Calu3 (cell line): ENCODE measurements at regions of chr4 and their contacts with region 1.

Region 1: GRCh38 chr4:147590249-147590920 is 26.8 kb upstream of the TMEM184C start:
- DNase-seq: peak; percentile 59
- H3K4me3 Mint-ChIP-seq: no peak overlapping the region
- H3K27ac Mint-ChIP-seq: no peak overlapping the region
- H3K4me1 Mint-ChIP-seq: no peaks in the 10 kb centered on the region
- H3K27me3 Mint-ChIP-seq: no peaks in the 10 kb centered on the region
- CTCF ChIP-seq: peak; percentile 38

Region 2: DNA sequence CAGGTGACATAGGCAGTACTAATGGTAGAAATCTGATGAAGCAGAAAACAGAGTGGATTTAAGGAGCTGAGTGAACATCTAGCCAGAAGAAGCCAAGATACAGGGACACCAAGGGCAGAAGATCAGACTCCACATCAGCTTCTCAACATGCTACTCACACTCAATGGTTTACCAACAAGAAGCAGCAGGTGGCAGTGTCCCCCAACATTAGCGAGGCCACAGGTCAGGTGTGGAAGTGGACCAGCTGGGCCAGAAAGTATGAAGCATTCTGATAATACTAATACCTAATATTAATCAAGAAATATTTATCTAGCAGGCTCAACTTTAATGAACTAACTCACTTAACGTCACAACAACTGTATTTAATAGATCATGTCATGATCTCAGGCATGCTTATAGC is 571.3 kb before region 1 on chr4:
- CTCF ChIA-PET with region 1: interaction called, 3 read pairs
- intact Hi-C with region 1: loop called (anchors 5 kb)
- DNase-seq: peak; percentile 65
- H3K4me3 Mint-ChIP-seq: no peak overlapping the region
- H3K27ac Mint-ChIP-seq: no peak overlapping the region
- H3K4me1 Mint-ChIP-seq: no peaks in the 10 kb centered on the region
- H3K27me3 Mint-ChIP-seq: no peaks in the 10 kb centered on the region
- CTCF ChIP-seq: peak; percentile 27

Region 3: DNA sequence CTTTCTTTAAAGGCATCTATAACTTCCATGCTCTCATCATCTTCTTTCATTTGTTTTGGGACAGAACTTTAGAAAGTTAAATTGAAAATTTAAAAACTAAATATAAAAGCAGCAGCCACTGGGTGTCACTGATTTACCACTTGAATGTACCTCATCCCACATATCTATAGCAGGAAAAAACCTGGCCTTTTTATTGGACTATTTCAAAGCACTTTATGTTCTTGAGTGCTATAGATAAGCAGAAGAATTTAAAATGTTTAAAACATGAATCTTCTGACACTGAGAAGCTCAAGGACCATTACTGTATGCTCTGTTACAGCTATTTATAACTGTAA is 479.4 kb before region 1 on chr4:
- CTCF ChIA-PET with region 1: no interaction called
- intact Hi-C with region 1: loop called (anchors 1 kb)
- DNase-seq: no peak
- H3K4me3 Mint-ChIP-seq: no peak overlapping the region
- H3K27ac Mint-ChIP-seq: no peak overlapping the region
- H3K4me1 Mint-ChIP-seq: no peaks in the 10 kb centered on the region
- H3K27me3 Mint-ChIP-seq: no peaks in the 10 kb centered on the region
- CTCF ChIP-seq: no peak

Region 4: DNA sequence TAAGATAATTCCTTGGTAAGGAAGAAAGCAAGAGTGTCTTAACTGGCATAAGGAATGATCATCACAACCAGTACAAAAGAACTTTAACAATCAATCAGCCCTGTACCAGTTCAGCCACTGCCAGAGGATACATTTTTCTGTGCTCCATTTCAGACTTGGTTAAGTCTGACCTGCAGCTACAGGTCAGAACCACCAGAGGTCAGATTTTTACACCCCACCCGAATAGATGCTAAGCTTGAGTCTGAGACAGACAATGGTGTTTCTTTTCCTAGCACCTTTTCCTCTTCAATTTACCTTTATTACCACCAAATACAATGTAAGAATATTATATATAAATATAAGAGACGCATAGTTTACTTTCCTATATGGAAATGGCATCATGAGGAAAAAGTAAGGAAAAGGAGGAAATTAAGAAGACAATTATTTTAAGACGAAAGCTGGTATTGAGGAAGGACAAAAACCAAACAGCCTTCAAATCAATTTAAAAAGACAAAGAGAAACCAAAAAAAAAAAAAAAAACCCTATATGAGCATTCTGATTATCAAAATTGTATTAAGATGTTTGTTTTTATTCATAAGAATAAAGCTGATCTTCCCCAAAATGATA is 429.4 kb before region 1 on chr4:
- CTCF ChIA-PET with region 1: interaction called, 10 read pairs
- intact Hi-C with region 1: loop called (anchors 1 kb)
- DNase-seq: peak; percentile 16
- H3K4me3 Mint-ChIP-seq: no peak overlapping the region
- H3K27ac Mint-ChIP-seq: no peak overlapping the region
- H3K4me1 Mint-ChIP-seq: no peaks in the 10 kb centered on the region
- H3K27me3 Mint-ChIP-seq: no peaks in the 10 kb centered on the region
- CTCF ChIP-seq: peak; percentile 41

Region 5: DNA sequence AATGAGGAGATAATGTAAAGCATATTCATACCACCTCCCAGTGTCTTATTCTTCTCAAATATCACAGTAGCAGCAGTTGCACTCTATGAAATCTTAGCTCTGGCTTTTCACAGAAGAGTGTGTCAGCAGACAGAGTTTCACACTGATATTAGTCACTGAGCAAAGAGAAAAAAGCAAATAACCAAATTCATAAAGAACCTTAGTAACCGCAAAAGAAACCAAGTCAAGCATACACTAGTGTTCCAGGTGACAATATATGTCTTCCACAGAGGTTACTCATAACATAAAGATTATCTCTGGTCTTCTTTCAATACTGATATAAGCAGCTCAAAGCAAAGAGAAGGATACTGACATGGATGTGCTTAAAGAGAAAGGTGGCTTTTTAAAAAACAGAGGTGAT is 291.2 kb before region 1 on chr4:
- CTCF ChIA-PET with region 1: no interaction called
- intact Hi-C with region 1: loop called (anchors 10 kb)
- DNase-seq: no peak
- H3K4me3 Mint-ChIP-seq: no peak overlapping the region
- H3K27ac Mint-ChIP-seq: no peak overlapping the region
- H3K4me1 Mint-ChIP-seq: peaks cover 7% of the 10 kb centered on the region
- H3K27me3 Mint-ChIP-seq: no peaks in the 10 kb centered on the region
- CTCF ChIP-seq: no peak

Region 6: DNA sequence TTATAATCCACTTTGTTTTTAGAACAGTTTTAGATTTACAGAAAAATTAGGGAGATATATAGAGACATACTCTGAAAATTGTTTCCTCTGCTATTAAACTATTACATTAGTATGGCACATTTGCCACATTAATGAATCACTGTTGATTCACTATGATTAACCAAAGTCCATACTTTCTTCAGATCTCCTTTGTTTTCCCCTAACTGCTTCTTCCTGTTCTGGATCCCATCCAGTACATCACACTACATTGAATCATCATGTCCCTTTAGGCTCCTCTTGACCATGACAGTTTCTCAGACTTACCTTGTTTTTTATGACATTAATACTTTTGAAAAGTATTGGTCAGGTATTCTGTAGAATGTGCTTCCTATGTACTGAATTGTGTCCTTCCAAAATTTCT is 218.7 kb before region 1 on chr4:
- CTCF ChIA-PET with region 1: no interaction called
- intact Hi-C with region 1: loop called (anchors 10 kb)
- DNase-seq: no peak
- H3K4me3 Mint-ChIP-seq: peak overlapping the region; percentile 22
- H3K27ac Mint-ChIP-seq: peak overlapping the region; percentile 93
- H3K4me1 Mint-ChIP-seq: peaks cover 38% of the 10 kb centered on the region
- H3K27me3 Mint-ChIP-seq: no peaks in the 10 kb centered on the region
- CTCF ChIP-seq: no peak

Region 7: DNA sequence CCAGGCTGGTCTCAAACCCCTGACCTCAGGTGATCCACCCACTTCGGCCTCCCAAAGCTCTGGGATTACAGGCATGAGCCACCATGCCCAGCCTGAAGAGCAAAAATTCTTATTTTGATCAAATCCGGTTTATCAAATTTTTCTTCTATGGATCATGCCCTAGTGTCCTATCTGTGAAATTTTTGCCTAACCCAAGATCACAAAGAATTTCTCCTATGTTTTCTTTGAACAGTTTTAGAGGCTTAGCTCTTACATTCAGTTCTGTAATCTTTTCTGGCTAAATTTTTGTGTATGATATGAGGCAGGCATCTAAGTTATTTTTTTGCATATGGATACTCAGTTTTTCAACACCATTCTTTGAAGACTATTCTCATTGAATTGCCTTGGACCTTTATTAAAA is 82.0 kb before region 1 on chr4:
- CTCF ChIA-PET with region 1: no interaction called
- intact Hi-C with region 1: no loop called
- DNase-seq: no peak
- H3K4me3 Mint-ChIP-seq: no peak overlapping the region
- H3K27ac Mint-ChIP-seq: no peak overlapping the region
- H3K4me1 Mint-ChIP-seq: no peaks in the 10 kb centered on the region
- H3K27me3 Mint-ChIP-seq: no peaks in the 10 kb centered on the region
- CTCF ChIP-seq: no peak

Region 8: GRCh38 chr4:147518846-147519767 is 71.3 kb before region 1 on chr4:
- CTCF ChIA-PET with region 1: interaction called, 23 read pairs
- intact Hi-C with region 1: loop called (anchors 1 kb)
- DNase-seq: peak; percentile 54
- H3K4me3 Mint-ChIP-seq: no peak overlapping the region
- H3K27ac Mint-ChIP-seq: no peak overlapping the region
- H3K4me1 Mint-ChIP-seq: no peaks in the 10 kb centered on the region
- H3K27me3 Mint-ChIP-seq: no peaks in the 10 kb centered on the region
- CTCF ChIP-seq: peak; percentile 49

Region 9: DNA sequence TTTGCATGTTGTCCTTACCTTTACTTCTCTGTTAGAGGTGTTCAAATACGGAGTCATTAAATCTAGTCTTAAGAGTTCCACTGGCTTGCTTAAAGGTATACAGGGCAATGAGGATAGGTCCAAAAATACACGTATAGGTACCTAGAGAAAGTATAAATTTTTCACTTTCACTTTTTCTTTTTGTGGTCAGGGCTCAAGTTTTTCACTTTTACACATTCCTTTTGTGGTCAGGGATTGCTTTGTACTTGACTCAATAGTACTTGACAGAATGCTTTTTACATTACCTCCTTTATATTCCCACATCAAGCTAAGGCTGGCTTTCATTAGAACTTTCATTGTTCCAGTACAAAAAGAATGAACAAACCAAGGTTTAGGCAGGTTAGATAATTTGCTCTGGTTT is 48.6 kb after region 1 on chr4:
- CTCF ChIA-PET with region 1: no interaction called
- intact Hi-C with region 1: no loop called
- DNase-seq: no peak
- H3K4me3 Mint-ChIP-seq: no peak overlapping the region
- H3K27ac Mint-ChIP-seq: no peak overlapping the region
- H3K4me1 Mint-ChIP-seq: no peaks in the 10 kb centered on the region
- H3K27me3 Mint-ChIP-seq: no peaks in the 10 kb centered on the region
- CTCF ChIP-seq: no peak

Region 10: DNA sequence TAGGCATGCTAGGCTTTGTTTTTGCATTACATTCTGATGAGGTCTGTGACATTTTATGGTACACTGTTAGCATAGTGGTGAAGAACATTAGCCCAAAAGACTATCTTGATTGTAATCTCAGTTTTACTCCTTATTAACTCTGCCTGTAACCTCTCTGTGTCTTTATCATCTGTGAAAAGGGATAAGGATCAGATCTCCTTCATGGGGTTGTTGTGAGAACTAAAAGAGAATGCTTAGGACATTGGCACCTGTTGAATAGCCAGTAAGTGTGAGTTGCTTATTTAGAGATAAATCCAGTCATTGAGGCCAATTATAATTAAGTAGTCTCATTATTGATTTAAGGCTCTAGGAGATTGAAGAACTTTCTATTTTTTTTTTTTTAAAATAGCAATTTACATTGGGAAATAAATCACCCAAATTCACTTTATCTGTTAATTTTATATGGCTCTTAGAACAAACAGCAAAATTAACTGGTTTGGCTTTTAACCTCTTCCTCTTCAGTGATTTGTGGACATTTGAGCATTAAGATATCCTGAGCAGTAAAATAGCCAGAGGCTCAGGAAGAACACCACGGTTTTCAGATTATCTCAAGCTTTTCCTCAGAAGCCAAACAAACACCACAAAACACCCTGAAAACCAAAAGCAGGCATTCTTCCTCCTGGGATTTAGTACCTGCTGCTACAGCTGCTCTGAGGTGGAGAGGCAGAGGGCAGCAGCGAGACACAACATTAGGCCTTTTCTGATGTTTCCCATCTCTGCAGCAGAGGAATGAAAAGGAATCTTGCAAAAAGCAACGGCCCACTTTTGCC is 334.4 kb after region 1 on chr4:
- CTCF ChIA-PET with region 1: no interaction called
- intact Hi-C with region 1: no loop called
- DNase-seq: peak; percentile 36
- H3K4me3 Mint-ChIP-seq: no peak overlapping the region
- H3K27ac Mint-ChIP-seq: no peak overlapping the region
- H3K4me1 Mint-ChIP-seq: no peaks in the 10 kb centered on the region
- H3K27me3 Mint-ChIP-seq: no peaks in the 10 kb centered on the region
- CTCF ChIP-seq: no peak